ENCODE measurements at regions of chr9 and their contacts with region 1.

Region 1: GRCh38 chr9:78196258-78196657 is 39.6 kb upstream of the CEP78 start:
- DNase-seq: no peak
- H3K4me3 Mint-ChIP-seq: no peak overlapping the region
- H3K27ac Mint-ChIP-seq: no peak overlapping the region
- H3K4me1 Mint-ChIP-seq: peaks cover 12% of the 10 kb centered on the region
- H3K27me3 Mint-ChIP-seq: no peaks in the 10 kb centered on the region

Region 2: DNA sequence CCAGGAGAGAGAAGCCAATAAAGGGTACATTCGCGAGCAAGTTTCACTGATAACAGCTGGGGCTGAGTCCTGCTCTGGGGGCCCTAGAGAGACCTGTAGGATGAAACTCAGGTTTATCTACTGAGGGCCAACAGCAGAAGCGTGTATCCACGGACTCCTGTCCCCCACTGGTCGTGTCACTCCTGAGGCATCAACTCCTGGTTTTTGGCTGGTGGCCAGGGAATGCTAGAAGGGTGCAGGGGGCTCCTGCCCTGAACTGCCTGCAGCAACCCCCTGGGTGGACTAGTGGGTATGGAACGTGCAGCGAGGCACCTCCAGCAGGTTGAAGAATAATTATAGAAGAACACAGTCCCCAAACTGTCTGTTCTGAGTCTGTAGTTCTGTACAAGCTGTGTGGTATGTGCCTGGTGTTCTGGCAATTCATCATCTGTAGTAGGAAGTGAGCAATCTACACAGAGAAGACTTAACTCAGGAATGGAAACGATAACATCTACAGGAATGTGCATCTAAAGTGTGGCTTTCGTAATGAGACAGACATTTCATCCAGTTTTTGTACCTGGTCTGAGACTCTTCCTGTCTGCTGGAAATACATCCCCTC is 483.6 kb before region 1 on chr9:
- CTCF ChIA-PET with region 1: no interaction called
- POLR2A ChIA-PET with region 1: no interaction called
- DNase-seq: no peak
- H3K4me3 Mint-ChIP-seq: no peak overlapping the region
- H3K27ac Mint-ChIP-seq: no peak overlapping the region
- H3K4me1 Mint-ChIP-seq: peaks cover 2% of the 10 kb centered on the region
- H3K27me3 Mint-ChIP-seq: peaks cover 3% of the 10 kb centered on the region

Region 3: GRCh38 chr9:78158286-78158685 is 38.0 kb before region 1 on chr9:
- CTCF ChIA-PET with region 1: no interaction called
- POLR2A ChIA-PET with region 1: no interaction called
- DNase-seq: no peak
- H3K4me3 Mint-ChIP-seq: no peak overlapping the region
- H3K27ac Mint-ChIP-seq: no peak overlapping the region
- H3K4me1 Mint-ChIP-seq: no peaks in the 10 kb centered on the region
- H3K27me3 Mint-ChIP-seq: peaks cover 6% of the 10 kb centered on the region

Region 4: DNA sequence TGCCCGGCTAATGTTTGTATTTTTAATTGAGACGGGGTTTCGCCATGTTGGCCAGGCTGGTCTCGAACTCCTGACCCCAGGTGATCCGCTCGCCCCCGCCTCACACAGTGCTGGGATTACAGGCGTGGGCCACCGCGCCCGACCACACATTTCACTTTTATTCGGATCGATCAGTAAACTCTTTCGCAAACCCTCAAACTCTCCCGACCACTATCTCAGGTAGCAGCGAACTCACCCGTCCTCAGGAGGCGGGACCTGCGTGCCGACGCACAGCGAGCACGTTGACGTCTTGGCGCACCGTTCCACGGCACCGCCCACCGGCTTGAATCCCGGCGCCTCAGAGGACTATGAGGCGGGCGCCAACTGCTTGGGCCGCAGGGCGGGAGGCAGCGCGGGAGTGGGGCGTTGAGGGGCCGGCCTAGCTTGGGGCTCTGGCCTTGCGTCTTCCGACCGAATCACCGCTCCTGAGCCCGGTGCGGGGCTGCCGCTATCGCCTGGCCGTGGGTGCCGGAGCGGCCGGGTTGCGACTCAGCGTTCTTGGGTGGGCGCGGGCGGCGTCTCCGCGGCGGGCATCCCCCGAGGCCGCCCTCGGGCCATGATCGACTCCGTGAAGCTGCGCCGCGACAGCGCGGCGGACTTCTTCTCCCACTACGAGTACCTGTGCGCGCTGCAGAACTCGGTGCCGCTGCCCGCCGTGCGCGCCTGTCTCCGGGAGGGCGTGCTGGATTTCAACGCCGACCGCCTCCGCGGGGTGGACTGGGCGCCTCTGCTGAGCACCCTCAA is 39.7 kb after region 1 on chr9 and contains the start of gene CEP78:
- CTCF ChIA-PET with region 1: interaction called, 5 read pairs
- POLR2A ChIA-PET with region 1: interaction called, 13 read pairs
- DNase-seq: peak; percentile 91
- H3K4me3 Mint-ChIP-seq: peak within 1 kb of the TSS; percentile 62
- H3K27ac Mint-ChIP-seq: peak within 1 kb of the TSS; percentile 72
- H3K4me1 Mint-ChIP-seq: peaks cover 47% of the 10 kb centered on the region
- H3K27me3 Mint-ChIP-seq: no peaks in the 10 kb centered on the region
- total RNA-seq, gene CEP78: 41.8 to 44.3 TPM

Region 5: DNA sequence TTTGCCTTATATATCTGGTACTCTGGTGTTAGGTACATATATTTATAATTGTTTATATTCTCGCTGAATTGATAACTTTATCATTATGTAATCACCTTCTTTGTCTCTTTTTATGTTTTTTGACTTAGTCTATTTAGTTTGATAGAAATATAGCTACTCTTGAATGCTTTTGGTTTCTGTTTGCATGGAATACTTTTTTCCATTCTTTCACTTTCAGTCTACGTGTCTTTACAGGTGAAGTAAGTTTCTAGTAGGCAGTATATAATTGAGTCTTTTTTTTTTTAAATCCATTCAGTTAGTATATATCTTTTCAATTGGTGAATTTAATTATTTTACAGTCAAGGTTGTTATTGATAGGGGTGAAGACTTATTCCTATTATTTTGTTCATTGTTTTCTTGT is 232.4 kb after region 1 on chr9:
- CTCF ChIA-PET with region 1: no interaction called
- POLR2A ChIA-PET with region 1: no interaction called
- DNase-seq: no peak
- H3K4me3 Mint-ChIP-seq: no peak overlapping the region
- H3K27ac Mint-ChIP-seq: no peak overlapping the region
- H3K4me1 Mint-ChIP-seq: peaks cover 2% of the 10 kb centered on the region
- H3K27me3 Mint-ChIP-seq: peaks cover 5% of the 10 kb centered on the region